Left colon (tissue), 2 donors: ENCODE measurements at regions of chr6 and their contacts with region 1.

Region 1: DNA sequence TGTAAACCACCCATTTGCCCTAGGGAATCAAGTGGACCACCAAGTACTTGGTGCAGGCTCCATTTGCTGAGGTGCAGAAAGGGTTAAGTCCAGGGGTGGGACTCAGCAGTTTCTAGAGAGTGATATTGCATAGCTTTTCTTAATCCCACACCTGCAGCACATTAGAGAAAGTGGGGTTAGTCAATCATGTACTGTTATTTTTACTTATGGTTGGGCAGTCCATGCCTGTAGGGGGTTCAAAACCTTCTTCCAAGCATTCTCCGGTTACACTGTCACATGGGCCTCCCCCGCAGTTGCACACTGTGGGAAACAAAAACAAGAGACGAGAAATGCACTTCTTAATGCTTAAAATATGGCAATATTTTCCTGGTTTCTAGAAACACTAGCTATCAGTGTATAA is 65.5 kb downstream of the LAMA4 start:
- DNase-seq: no peak
- ATAC-seq: no peak

Region 2: GRCh38 chr6:112061605-112062004 is 127.3 kb before region 1 on chr6:
- intact Hi-C with region 1: no loop called
- DNase-seq: no peak
- ATAC-seq: no peak

Region 3: DNA sequence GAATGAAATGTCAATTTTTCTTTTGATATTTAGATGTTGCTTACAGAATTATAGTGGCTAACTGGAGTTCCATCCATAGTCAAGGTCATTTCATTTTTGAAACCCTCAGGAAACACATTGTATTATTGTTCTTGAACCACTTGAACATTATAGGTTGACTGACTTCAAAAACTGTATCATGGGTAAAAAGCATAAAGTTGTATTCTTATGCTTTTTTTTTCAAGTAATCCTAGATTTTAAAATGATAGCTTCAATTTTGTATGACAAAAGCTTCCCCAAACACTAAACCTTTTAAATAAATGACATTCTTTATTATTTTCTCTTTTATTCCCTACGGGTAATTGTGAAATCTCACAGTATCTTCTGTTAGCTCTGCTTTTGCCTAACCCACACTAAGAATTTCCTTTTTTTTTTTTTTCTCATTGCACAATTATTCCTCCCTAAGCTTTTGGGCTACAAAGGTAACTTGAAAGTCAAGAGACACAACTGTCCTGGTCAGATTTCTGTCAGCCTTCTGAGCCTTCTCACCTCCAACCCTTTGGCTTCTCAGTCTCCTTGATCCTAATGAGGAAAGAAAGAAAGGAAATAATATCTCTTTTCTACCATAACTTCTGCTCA is 102.4 kb after region 1 on chr6:
- intact Hi-C with region 1: loop called in 1 of 2 experiments (anchors 5 kb)
- DNase-seq: no peak
- ATAC-seq: no peak